Activated naive CD4-positive, alpha-beta T cell treated with anti-CD3 and anti-CD28 coated beads for 36 hours (primary cell): ENCODE measurements at regions of chr3 and their contacts with region 1.

Region 1: GRCh38 chr3:167032261-167032876 is 347.7 kb downstream of the ZBBX start:
- DNase-seq: no peak
- H3K4me3 Mint-ChIP-seq: no peak overlapping the region
- H3K27ac Mint-ChIP-seq: no peak overlapping the region
- H3K4me1 Mint-ChIP-seq: no peaks in the 10 kb centered on the region
- H3K27me3 Mint-ChIP-seq: no peaks in the 10 kb centered on the region

Region 2: GRCh38 chr3:165854696-165855095 is 1177.7 kb before region 1 on chr3:
- CTCF ChIA-PET with region 1: no interaction called
- intact Hi-C with region 1: loop called (anchors 5 kb)
- DNase-seq: no peak
- H3K4me3 Mint-ChIP-seq: no peak overlapping the region
- H3K27ac Mint-ChIP-seq: no peak overlapping the region
- H3K4me1 Mint-ChIP-seq: no peaks in the 10 kb centered on the region
- H3K27me3 Mint-ChIP-seq: no peaks in the 10 kb centered on the region